Activated CD4-positive, alpha-beta memory T cell treated with anti-CD3 and anti-CD28 coated beads for 36 hours (primary cell): ENCODE measurements at regions of chr19 and their contacts with region 1.

Region 1: GRCh38 chr19:262125-262524 is 29.1 kb downstream of the PLPP2 start:
- DNase-seq: no peak
- H3K4me3 Mint-ChIP-seq: no peak overlapping the region
- H3K27ac Mint-ChIP-seq: peak overlapping the region; percentile 76
- H3K4me1 Mint-ChIP-seq: peaks cover 16% of the 10 kb centered on the region
- H3K27me3 Mint-ChIP-seq: peaks cover 27% of the 10 kb centered on the region

Region 2: GRCh38 chr19:246541-246940 is 15.6 kb before region 1 on chr19:
- CTCF ChIA-PET with region 1: interaction called, 11 read pairs
- POLR2A ChIA-PET with region 1: no interaction called
- intact Hi-C with region 1: no loop called
- DNase-seq: peak; percentile 20
- H3K4me3 Mint-ChIP-seq: no peak overlapping the region
- H3K27ac Mint-ChIP-seq: no peak overlapping the region
- H3K4me1 Mint-ChIP-seq: no peaks in the 10 kb centered on the region
- H3K27me3 Mint-ChIP-seq: peaks cover 1% of the 10 kb centered on the region